Gastrocnemius medialis (tissue), 4 donors: ENCODE measurements at regions of chr18 and their contacts with region 1.

Region 1: GRCh38 chr18:71682557-71682956 is 861.6 kb downstream of the CBLN2 start:
- DNase-seq: no peak
- ATAC-seq: no peak
- H3K4me3 ChIP-seq: no peak overlapping the region
- H3K27ac ChIP-seq: no peak overlapping the region
- H3K4me1 ChIP-seq: no peaks in the 10 kb centered on the region
- H3K27me3 ChIP-seq: no peaks in the 10 kb centered on the region
- CTCF ChIP-seq: no peak
- POLR2A ChIP-seq: no peak

Region 2: GRCh38 chr18:71327850-71328249 is 354.7 kb before region 1 on chr18:
- in situ Hi-C with region 1: no loop called
- intact Hi-C with region 1: no loop called
- DNase-seq: no peak
- ATAC-seq: no peak
- H3K4me3 ChIP-seq: no peak overlapping the region
- H3K27ac ChIP-seq: no peak overlapping the region
- H3K4me1 ChIP-seq: no peaks in the 10 kb centered on the region
- H3K27me3 ChIP-seq: no peaks in the 10 kb centered on the region
- CTCF ChIP-seq: no peak
- POLR2A ChIP-seq: no peak

Region 3: DNA sequence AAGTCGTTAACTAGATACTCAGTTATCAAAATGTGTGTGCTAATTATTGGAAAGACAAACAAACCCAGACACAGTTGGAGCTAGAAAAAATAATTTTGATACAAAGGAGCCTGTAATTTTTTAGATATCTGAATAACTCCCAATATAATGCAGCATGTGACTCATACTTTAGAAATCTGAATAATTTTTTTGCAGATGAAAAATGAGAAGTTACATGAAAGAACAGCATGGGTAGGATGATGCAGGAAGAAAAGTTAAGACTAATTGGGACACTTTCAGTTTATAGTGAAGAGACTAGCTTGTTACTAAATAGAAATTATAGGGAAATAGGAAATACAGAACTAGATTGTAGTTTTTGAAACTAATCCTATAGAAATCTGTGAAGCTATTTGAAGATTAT is 84.2 kb before region 1 on chr18:
- in situ Hi-C with region 1: loop called in 1 of 4 experiments (anchors 25 kb)
- intact Hi-C with region 1: no loop called
- DNase-seq: no peak
- ATAC-seq: no peak
- H3K4me3 ChIP-seq: no peak overlapping the region
- H3K27ac ChIP-seq: no peak overlapping the region
- H3K4me1 ChIP-seq: no peaks in the 10 kb centered on the region
- H3K27me3 ChIP-seq: no peaks in the 10 kb centered on the region
- CTCF ChIP-seq: no peak
- POLR2A ChIP-seq: no peak